ENCODE measurements at regions of chr11 and their contacts with region 1.

Region 1: GRCh38 chr11:100855466-100856067 is 168.5 kb downstream of the ARHGAP42 start:
- DNase-seq: no peak
- ATAC-seq: peak; percentile 31

Region 2: GRCh38 chr11:100687630-100688395 is 167.8 kb before region 1 on chr11:
- intact Hi-C with region 1: loop called (anchors 10 kb)
- DNase-seq: peak; percentile 73
- ATAC-seq: peak; percentile 74

Measured in sciatic nerve (tissue), 2 donors.